Transverse colon (tissue), 4 donors: ENCODE measurements at regions of chr21 and their contacts with region 1.

Region 1: GRCh38 chr21:18053151-18053550 is 191.5 kb upstream of the CHODL start:
- DNase-seq: no peak
- H3K4me3 ChIP-seq: no peak overlapping the region
- H3K27ac ChIP-seq: no peak overlapping the region
- H3K4me1 ChIP-seq: no peaks in the 10 kb centered on the region
- H3K27me3 ChIP-seq: no peaks in the 10 kb centered on the region
- CTCF ChIP-seq: no peak
- EP300 ChIP-seq: no peak
- POLR2A ChIP-seq: no peak

Region 2: DNA sequence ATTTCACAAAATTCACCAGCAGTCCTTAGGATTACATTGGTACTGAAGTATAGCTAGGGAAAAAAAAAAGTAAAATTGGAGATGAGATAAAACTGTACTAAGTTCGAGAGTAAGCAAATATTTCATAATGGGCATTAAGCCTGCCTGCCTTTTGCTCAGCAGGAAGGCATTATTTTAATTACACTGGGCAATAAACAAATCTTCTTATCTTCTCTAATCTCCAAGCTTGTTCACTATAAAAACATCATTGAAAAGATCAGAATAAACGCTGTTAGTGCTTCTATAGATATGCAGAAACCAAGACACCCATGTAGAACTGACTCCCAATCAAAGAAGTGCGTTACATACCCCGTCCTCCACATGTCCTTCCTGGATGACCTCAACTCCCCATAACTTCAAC is 17.2 kb after region 1 on chr21:
- in situ Hi-C with region 1: no loop called
- intact Hi-C with region 1: loop called (anchors 2 kb)
- DNase-seq: no peak
- H3K4me3 ChIP-seq: no peak overlapping the region
- H3K27ac ChIP-seq: no peak overlapping the region
- H3K4me1 ChIP-seq: no peaks in the 10 kb centered on the region
- H3K27me3 ChIP-seq: no peaks in the 10 kb centered on the region
- CTCF ChIP-seq: no peak
- EP300 ChIP-seq: no peak
- POLR2A ChIP-seq: no peak